AG04450 (cell line): ENCODE measurements at regions of chr6 and their contacts with region 1.

Region 1: GRCh38 chr6:42805297-42805861 is 23.5 kb downstream of the BICRAL start:
- DNase-seq: no peak
- H3K4me3 ChIP-seq: no peak overlapping the region
- H3K27ac ChIP-seq: no peak overlapping the region
- H3K27me3 ChIP-seq: no peaks in the 10 kb centered on the region
- CTCF ChIP-seq: no peak

Region 2: DNA sequence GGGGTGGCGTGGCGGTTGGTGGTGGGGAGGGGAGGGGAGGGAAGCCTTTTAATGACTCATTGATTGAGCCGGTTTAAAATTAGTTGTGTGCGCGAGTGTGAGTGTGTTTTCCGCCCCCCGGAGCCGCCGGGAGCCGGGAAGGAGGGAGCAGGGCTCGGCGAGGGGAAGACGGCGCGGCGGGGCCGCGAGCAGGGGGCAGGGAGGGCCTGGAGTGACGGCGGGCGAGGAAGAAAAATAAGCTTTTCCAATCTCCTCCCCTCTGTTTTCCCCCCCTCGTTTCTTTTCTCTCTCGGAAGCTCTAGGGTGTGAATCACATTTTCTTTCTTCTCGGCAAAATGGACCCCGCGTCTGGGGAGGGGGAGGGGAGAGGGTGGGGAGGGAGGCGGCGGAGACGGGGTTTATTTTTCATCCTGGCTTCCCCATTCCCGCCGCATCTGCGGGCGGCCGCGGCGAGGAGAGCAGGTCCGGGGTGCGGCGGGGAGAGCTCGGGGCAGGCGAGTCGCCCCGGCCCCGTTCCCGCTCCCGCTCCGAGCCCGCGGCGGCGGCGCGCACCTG is 22.7 kb before region 1 on chr6:
- CTCF ChIA-PET with region 1: no interaction called
- POLR2A ChIA-PET with region 1: interaction called, 20 read pairs
- DNase-seq: peak; percentile 84
- H3K4me3 ChIP-seq: peak overlapping the region; percentile 81
- H3K27ac ChIP-seq: peak overlapping the region; percentile 96
- H3K27me3 ChIP-seq: no peaks in the 10 kb centered on the region
- CTCF ChIP-seq: no peak